Heart left ventricle (tissue), 16 donors: ENCODE measurements at regions of chr20 and their contacts with region 1.

Region 1: DNA sequence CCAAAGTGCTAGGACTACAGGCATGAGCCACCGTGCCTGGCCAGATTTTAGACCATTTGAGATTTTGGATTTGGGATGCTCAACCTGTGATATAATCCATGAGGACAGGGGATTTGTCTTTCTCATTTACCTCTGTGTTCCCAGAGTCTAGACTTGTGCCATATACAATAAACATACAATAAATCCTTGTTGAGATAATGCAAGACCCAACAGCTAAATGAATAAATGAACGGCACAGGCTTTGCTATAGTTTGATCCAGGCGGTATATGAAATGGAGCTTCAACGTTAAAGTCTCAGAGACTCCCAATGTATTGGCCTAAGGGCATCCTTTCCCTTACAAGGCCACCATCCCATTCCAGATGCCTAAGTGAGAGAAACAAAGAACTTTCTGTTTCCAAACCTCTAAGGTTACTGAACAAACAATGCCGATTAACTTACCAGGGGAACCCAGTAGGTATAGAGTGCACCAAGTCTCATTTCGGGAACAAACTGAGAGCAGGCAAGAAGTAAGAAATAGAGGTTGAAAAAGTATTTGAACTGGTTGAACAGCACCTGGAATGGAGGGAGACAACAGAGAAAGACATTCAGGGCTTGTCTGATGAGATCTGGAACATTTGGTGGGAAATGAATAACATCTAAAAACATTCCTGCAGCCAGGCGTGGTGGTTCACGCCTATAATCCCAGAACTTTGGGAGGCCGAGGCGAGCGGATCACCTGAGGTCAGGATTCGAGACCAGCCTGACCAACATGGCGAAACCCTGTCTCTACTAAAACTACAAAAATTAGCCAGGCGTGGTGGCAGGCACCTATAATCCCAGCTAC is 42.6 kb downstream of the ATP9A start:
- DNase-seq: no peak
- ATAC-seq: no peak
- H3K4me3 ChIP-seq: no peak overlapping the region
- H3K27ac ChIP-seq: no peak overlapping the region
- H3K4me1 ChIP-seq: no peaks in the 10 kb centered on the region
- H3K27me3 ChIP-seq: no peaks in the 10 kb centered on the region
- CTCF ChIP-seq: no peak
- POLR2A ChIP-seq: no peak

Region 2: GRCh38 chr20:51767010-51767558 is 41.5 kb after region 1 on chr20:
- intact Hi-C with region 1: loop called in 1 of 10 experiments (anchors 10 kb)
- DNase-seq: peak; percentile 53 to 85 (median 74)
- ATAC-seq: peak; percentile 69 to 96 (median 94)
- H3K4me3 ChIP-seq: peak overlapping the region; percentile 52 to 96 (median 90)
- H3K27ac ChIP-seq: peak overlapping the region in 6 of 12 donors; percentile 40 to 82 (median 66)
- H3K4me1 ChIP-seq: peaks cover 0 to 17% (median 0%) of the 10 kb centered on the region in 12 donors
- H3K27me3 ChIP-seq: peaks cover 0 to 19% (median 0%) of the 10 kb centered on the region in 9 donors
- CTCF ChIP-seq: no peak
- POLR2A ChIP-seq: no peak